ENCODE measurements at regions of chr11 and their contacts with region 1.

Region 1: DNA sequence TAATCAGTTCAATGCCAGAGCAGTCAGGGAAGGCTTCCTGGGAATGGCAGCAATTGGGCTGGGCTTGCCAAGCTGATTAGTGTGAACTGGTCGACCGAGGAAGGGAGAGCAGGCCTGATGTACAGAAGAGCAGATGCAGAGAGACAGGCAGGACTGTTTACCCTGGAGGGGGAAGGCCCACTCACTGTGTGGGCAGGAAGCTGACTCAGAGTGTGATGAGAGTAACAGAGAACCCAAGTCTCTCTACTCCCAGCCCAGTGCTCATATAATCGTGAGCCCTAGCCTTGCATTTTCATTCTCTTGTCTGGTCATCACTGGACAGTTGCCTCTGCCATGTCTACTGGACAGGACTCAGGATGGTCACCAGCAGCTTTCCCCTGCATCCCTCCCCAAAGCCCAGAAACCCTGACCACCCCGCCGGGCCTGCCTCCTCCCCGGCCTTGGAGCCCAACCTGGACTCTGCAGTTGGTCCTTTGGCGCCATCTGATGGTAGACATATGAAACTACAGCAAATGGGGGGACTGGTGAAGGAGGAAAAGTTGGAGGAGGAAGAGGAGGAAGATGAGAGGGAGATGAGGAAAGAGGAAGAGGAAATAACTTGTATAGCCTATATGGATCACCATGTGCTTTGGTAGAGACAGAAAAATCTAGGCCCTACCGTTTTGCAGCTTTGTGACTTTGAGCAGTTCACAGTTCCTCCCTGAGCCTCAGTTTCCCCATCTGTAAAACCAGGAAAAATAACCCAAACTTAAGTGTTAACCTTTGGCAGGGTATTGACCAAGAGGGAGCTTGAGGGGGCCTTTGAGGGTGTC is 43.4 kb upstream of the PRDM11 start:
- DNase-seq: peak in 1 of 2 experiments; percentile 77
- H3K4me3 ChIP-seq: no peak overlapping the region
- H3K27ac ChIP-seq: no peak overlapping the region
- H3K4me1 ChIP-seq: no peaks in the 10 kb centered on the region; a peak in 2 of 7 replicates
- H3K27me3 ChIP-seq: no peaks in the 10 kb centered on the region
- CTCF ChIP-seq: peak; percentile 67 to 97 (median 89)
- EP300 ChIP-seq: no peak
- POLR2A ChIP-seq: no peak
- RAD21 ChIP-seq: peak; percentile 99

Region 2: GRCh38 chr11:44855493-44855849 is 247.5 kb before region 1 on chr11:
- CTCF ChIA-PET with region 1: no interaction called
- POLR2A ChIA-PET with region 1: no interaction called
- DNase-seq: no peak
- H3K4me3 ChIP-seq: no peak overlapping the region
- H3K27ac ChIP-seq: no peak overlapping the region
- H3K4me1 ChIP-seq: peaks cover 12 to 30% (median 20%) of the 10 kb centered on the region in 4 experiments
- H3K27me3 ChIP-seq: no peaks in the 10 kb centered on the region
- CTCF ChIP-seq: no peak
- EP300 ChIP-seq: no peak
- POLR2A ChIP-seq: no peak
- RAD21 ChIP-seq: no peak

Region 3: DNA sequence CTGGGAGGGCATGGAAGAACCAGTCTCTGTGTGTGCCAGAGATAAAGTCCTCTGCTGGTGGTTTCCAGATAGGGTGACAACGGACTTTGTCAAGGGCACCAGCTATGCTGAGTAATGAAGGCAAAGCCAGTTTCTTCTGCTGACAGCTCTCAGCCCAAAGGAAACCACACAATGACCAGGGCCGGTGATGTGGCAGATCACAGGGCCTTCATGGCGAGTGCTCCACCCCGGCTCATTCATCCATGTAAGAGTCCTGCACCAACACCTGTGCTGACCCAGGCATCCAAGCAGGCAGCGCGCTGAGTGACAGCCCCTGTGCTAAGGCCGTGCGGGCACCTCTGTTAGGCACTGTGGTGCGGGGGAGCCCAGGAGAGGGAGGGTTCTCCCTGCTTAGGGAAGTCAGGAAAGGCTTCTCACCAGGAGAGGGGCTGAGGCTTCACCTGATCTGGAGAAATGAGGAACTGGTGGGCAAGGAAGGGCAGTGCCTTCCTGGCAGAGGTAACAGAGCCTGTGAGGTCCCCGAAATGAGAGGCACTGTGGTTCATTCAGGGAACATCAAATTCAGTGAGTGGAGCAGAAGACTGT is 186.1 kb before region 1 on chr11:
- CTCF ChIA-PET with region 1: interaction called, 26 read pairs
- POLR2A ChIA-PET with region 1: interaction called, 3 read pairs
- DNase-seq: no peak
- H3K4me3 ChIP-seq: no peak overlapping the region
- H3K27ac ChIP-seq: no peak overlapping the region
- H3K4me1 ChIP-seq: peaks cover 0 to 18% (median 3%) of the 10 kb centered on the region in 4 experiments; a peak in 6 of 7 replicates
- H3K27me3 ChIP-seq: no peaks in the 10 kb centered on the region; a peak in 1 of 7 replicates
- CTCF ChIP-seq: no peak
- EP300 ChIP-seq: no peak
- POLR2A ChIP-seq: no peak
- RAD21 ChIP-seq: no peak

Region 4: DNA sequence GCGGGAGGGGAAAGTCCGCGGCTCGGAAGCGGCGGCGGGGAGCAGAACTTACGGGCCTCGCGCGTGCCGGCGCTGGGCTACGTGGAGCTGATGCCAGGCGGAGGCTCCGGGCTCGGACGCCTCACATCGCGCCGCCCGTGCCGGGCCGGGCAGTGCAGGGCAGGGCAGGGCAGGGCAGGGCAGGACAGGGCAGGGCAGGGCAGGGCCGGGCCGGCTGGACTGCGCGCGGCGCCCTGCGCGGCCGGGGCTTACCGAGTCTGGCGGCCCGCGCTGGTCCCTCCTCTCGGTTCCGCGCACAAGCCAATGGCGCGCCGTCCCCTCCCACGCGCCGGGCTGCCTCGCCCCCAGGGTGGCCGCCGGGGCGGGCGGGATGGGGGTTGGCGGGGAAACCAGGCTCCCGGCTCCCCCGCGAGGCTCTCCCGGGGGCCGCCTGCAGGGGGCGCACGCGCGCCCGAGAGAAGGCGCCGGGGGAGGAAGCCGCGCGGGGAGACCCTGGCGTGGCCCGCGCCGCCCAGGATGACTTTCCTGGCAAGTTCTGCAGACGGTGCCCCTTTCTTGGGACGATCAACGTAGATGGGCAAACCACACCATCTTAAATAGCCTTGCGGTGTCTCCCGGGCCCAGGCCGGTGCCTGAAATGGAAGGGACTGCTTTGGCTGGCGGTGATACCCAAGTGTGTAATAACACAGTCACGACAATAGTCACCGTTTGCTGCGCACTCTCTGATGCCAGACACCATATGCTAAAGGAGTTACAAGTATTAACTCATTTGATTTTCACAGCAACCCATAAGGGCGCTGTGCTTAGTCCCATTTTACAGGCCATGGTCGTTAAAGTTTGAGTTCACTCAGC is 152.2 kb before region 1 on chr11 and contains the start of gene TP53I11:
- CTCF ChIA-PET with region 1: interaction called, 1,347 read pairs
- POLR2A ChIA-PET with region 1: interaction called, 3 read pairs
- DNase-seq: no peak
- H3K4me3 ChIP-seq: peak within 1 kb of the TSS; percentile 64 to 78 (median 70)
- H3K27ac ChIP-seq: peak within 1 kb of the TSS; percentile 21; the same call in 1 of the 2 replicates
- H3K4me1 ChIP-seq: peaks cover 12 to 51% (median 31%) of the 10 kb centered on the region in 4 experiments
- H3K27me3 ChIP-seq: no peaks in the 10 kb centered on the region; a peak in 1 of 7 replicates
- CTCF ChIP-seq: peak in 2 of 3 experiments; percentile 33 to 70; a peak in 3 of 4 replicates
- EP300 ChIP-seq: no peak
- POLR2A ChIP-seq: no peak
- RAD21 ChIP-seq: peak; percentile 28 to 57; a peak in 3 of 4 replicates
- total RNA-seq, gene TP53I11: 46.3 and 53.7 TPM in 2 replicates

Region 5: DNA sequence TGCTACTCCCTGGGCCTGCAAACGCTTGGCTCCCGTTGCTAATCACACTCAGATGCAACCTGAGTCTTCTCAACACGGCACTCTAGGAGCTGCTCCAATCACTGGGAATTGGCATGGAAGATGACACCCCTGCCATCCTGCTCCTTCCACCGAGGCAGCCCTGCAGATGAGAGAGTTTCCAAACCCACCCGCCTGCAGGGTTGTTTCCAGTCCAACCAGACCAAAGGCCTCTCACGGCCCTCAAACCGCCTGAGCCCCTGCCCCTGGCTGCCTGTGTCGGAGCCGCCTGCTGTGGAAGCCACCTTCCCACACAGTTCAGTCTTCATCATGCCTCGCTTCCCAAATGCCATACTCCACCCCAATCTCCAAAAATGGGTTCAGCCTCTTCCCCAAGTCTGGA is 115.5 kb before region 1 on chr11:
- CTCF ChIA-PET with region 1: interaction called, 13 read pairs
- POLR2A ChIA-PET with region 1: no interaction called
- DNase-seq: no peak
- H3K4me3 ChIP-seq: no peak overlapping the region
- H3K27ac ChIP-seq: no peak overlapping the region
- H3K4me1 ChIP-seq: 0 out of 7 replicates have a peak, but pooled peaks cover 0 to 4% (median under 1%) of the 10 kb centered on the region in 4 experiments
- H3K27me3 ChIP-seq: no peaks in the 10 kb centered on the region
- CTCF ChIP-seq: no peak
- EP300 ChIP-seq: no peak
- POLR2A ChIP-seq: no peak
- RAD21 ChIP-seq: no peak

Region 6: GRCh38 chr11:45025716-45026492 is 77.1 kb before region 1 on chr11:
- CTCF ChIA-PET with region 1: interaction called, 64 read pairs
- POLR2A ChIA-PET with region 1: no interaction called
- DNase-seq: no peak
- H3K4me3 ChIP-seq: no peak overlapping the region
- H3K27ac ChIP-seq: no peak overlapping the region
- H3K4me1 ChIP-seq: peaks cover 6 to 16% (median 11%) of the 10 kb centered on the region in 4 experiments; a peak in 6 of 7 replicates
- H3K27me3 ChIP-seq: no peaks in the 10 kb centered on the region
- CTCF ChIP-seq: no peak
- EP300 ChIP-seq: no peak
- POLR2A ChIP-seq: no peak
- RAD21 ChIP-seq: no peak

Region 7: GRCh38 chr11:45079943-45080719 is 22.9 kb before region 1 on chr11:
- CTCF ChIA-PET with region 1: interaction called, 31 read pairs
- POLR2A ChIA-PET with region 1: interaction called, 3 read pairs
- DNase-seq: no peak
- H3K4me3 ChIP-seq: no peak overlapping the region
- H3K27ac ChIP-seq: no peak overlapping the region
- H3K4me1 ChIP-seq: peaks cover 11 to 35% (median 12%) of the 10 kb centered on the region in 4 experiments
- H3K27me3 ChIP-seq: no peaks in the 10 kb centered on the region
- CTCF ChIP-seq: no peak
- EP300 ChIP-seq: no peak
- POLR2A ChIP-seq: no peak
- RAD21 ChIP-seq: no peak

Measured in H1 (cell line).